ENCODE measurements at regions of chr10 and their contacts with region 1.

Region 1: GRCh38 chr10:5684318-5684970 is at the start of gene TASOR2:
- DNase-seq: peak; percentile 96
- H3K4me3 Mint-ChIP-seq: peak within 1 kb of the TSS; percentile 97
- H3K27ac Mint-ChIP-seq: peak within 1 kb of the TSS; percentile 97
- H3K4me1 Mint-ChIP-seq: peaks cover 62% of the 10 kb centered on the region
- H3K27me3 Mint-ChIP-seq: no peaks in the 10 kb centered on the region
- total RNA-seq, gene TASOR2: 89.2 and 90.9 TPM in 2 replicates

Region 2: GRCh38 chr10:5446390-5446926 is 238.0 kb before region 1 on chr10:
- intact Hi-C with region 1: loop called (anchors 2 kb)
- DNase-seq: peak; percentile 75
- H3K4me3 Mint-ChIP-seq: peak overlapping the region; percentile 89
- H3K27ac Mint-ChIP-seq: peak overlapping the region; percentile 79
- H3K4me1 Mint-ChIP-seq: peaks cover 62% of the 10 kb centered on the region
- H3K27me3 Mint-ChIP-seq: no peaks in the 10 kb centered on the region

Region 3: DNA sequence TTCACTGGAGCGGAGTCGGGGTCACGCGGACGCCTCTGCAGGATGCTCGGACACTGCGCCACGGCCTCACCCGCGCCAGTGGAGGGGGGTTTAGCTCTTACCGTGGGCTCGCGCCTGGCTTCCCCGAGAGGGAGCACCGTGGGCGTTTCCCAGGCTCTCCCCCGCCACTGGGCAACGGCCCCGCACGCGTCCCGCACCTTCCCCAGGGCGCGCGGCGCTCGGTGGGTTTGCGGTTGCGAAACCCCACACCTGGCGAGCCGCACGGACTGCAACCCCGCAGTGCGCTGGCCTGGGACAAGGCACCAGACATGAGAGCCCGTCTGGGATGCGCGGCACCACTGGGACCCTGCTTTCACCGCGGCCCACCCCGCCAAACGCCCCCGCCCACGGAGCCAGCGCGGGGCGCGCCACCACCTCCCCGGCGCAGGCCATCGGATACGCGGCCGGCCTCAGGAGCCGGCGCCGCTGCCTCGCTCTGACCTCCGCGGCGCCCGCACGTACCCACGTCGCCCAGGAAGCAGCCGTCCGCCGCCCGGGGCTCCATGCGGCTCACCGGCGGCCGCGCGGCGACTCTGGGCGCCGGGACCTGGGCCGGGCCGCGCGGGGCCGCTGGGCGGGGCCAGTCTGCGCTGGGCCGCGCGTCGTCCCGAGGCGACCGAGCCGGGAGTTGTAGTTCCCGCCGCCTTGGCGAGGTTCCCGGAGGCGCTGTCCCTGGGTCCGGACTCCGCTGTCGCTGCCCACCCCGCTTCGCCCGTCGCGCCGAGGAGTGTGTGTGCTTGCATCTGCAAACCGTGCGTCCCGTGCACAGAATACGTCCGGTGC is 18.2 kb before region 1 on chr10 and contains the start of gene ASB13:
- intact Hi-C with region 1: loop called (anchors 1 kb)
- DNase-seq: peak; percentile 27
- H3K4me3 Mint-ChIP-seq: peak within 1 kb of the TSS; percentile 88
- H3K27ac Mint-ChIP-seq: peak within 1 kb of the TSS; percentile 86
- H3K4me1 Mint-ChIP-seq: peaks cover 12% of the 10 kb centered on the region
- H3K27me3 Mint-ChIP-seq: peaks cover 16% of the 10 kb centered on the region
- total RNA-seq, gene ASB13: 12.7 and 14.6 TPM in 2 replicates

Region 4: DNA sequence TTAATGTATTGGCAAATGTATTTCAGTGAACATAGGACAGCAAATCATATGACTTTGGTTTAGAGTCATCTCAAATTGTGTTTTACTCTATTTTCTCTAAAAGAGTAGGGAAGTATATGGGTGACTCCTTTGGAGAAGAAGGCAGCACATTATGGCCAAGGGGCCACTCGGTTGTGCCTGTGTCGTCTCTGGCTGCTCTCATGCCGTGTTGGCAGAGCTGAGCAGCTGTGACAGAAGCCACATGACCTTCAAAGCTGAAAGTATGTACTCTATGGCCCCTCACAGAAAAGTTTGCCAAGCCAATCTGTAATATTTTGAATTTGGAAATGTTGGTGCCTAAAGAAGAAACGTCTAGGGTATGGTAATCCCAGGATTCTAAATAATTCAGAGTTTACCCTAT is 47.7 kb after region 1 on chr10:
- intact Hi-C with region 1: loop called (anchors 1 kb)
- DNase-seq: no peak
- H3K4me3 Mint-ChIP-seq: no peak overlapping the region
- H3K27ac Mint-ChIP-seq: peak overlapping the region; percentile 46
- H3K4me1 Mint-ChIP-seq: peaks cover 43% of the 10 kb centered on the region
- H3K27me3 Mint-ChIP-seq: no peaks in the 10 kb centered on the region

Region 5: GRCh38 chr10:5873515-5873995 is 189.1 kb after region 1 on chr10:
- intact Hi-C with region 1: loop called (anchors 1 kb)
- DNase-seq: peak; percentile 59
- H3K4me3 Mint-ChIP-seq: peak overlapping the region; percentile 43
- H3K27ac Mint-ChIP-seq: no peak overlapping the region
- H3K4me1 Mint-ChIP-seq: peaks cover 6% of the 10 kb centered on the region
- H3K27me3 Mint-ChIP-seq: no peaks in the 10 kb centered on the region

Region 6: DNA sequence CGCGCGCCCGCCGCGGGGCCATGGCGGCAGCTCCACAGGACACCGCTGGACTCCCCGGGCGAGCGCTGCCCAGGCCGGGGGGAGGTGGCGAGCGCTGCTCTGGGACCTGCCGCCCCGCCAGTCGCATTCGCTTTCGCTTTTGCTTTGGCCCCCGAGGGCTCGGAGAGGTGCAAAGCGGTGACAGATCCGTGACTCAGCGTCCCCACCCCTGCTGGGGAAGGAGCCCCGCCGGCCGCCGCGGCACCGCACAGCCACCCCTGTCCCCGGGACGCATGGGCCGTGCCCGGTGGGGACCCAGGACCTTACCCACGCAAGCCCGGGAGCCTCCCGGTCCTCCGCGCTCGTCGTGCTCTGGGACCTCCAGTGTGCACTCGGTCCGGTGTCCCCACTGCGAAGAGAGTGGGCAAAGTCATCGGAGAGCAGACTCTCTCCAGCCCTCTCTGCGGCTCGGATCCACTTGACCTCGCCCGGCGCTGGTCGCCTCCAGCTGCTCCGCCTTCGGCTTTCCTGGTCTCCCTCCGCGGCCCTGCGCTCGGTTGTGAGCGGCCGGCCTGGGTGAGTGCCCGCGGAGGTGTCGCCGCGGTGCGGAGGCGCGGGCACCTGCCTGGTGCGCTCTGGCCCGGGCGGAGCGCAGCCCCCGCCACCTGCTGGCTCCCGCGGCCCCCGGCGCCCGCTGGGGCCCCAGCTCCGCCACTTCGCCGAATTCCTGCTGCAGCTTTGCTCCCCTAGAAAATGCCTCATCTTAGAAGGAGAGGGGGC is 293.2 kb after region 1 on chr10 and contains the start of gene IL15RA:
- intact Hi-C with region 1: loop called (anchors 5 kb)
- DNase-seq: peak; percentile 88
- H3K4me3 Mint-ChIP-seq: peak within 1 kb of the TSS; percentile 93
- H3K27ac Mint-ChIP-seq: peak within 1 kb of the TSS; percentile 90
- H3K4me1 Mint-ChIP-seq: peaks cover 31% of the 10 kb centered on the region
- H3K27me3 Mint-ChIP-seq: peaks cover 3% of the 10 kb centered on the region
- total RNA-seq, gene IL15RA: 23.4 and 24.4 TPM in 2 replicates

Region 7: GRCh38 chr10:6074489-6075301 is 390.3 kb after region 1 on chr10:
- intact Hi-C with region 1: no loop called
- DNase-seq: no peak
- H3K4me3 Mint-ChIP-seq: peak overlapping the region; percentile 43
- H3K27ac Mint-ChIP-seq: peak overlapping the region; percentile 41
- H3K4me1 Mint-ChIP-seq: peaks cover 63% of the 10 kb centered on the region
- H3K27me3 Mint-ChIP-seq: no peaks in the 10 kb centered on the region

Region 8: DNA sequence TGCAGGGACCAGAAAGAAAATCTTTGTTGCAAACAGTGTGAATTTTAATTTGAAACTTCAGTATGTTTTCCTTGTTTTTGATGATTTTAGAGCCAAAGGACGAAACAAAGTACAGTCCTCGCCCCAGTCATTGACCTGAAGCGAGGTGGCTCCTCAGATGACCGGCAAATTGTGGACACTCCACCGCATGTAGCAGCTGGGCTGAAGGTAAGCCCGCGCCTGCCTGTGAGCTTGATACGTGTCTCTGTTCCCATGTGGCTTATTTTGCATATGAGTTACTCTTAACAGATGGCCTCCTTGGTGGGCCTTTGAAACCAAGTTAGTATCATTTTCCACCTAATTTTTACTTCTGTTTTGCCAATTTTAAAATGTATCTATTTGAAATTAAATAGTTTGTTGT is 416.7 kb after region 1 on chr10:
- intact Hi-C with region 1: no loop called
- DNase-seq: no peak
- H3K4me3 Mint-ChIP-seq: no peak overlapping the region
- H3K27ac Mint-ChIP-seq: no peak overlapping the region
- H3K4me1 Mint-ChIP-seq: peaks cover 28% of the 10 kb centered on the region
- H3K27me3 Mint-ChIP-seq: no peaks in the 10 kb centered on the region

Measured in activated T-helper 1 cell treated with anti-CD3 and anti-CD28 coated beads, Interleukin-12 subunit alpha, Interleukin-12 subunit beta, Interleukin-2, Interleukin-4 antibody, amounts not matched to agents 30 ng/mL and 10 ng/mL and 1 ng/mL, durations not matched to agents 14 hours and 24 hours and 36 hours (primary cell).